K562 (cell line): ENCODE measurements at regions of chr10 and their contacts with region 1.

Region 1: DNA sequence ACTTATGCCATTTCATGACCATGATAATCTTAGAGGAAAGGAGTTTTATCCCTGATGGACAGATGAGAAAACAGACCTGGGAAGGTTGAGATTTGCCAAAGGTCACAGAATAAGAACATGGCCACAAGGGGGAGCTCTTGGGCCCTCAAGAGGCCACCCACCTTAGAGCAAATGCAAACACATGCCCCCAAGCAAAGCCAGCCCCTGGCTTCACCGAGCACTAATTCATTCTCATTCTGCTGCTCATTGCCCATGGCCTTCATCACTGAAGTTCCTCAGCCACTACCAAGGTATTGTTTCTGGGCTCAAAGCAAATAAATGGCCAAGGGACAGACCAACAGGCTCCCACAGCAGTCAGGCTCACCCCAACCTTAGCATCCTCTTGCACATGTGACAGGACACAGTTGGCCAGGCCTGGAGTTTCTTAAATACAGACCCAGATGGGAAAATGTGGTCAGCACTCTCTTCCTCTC is 44.2 kb downstream of the PDLIM1 start:
- DNase-seq: peak; percentile 59 to 81 (median 62)
- ATAC-seq: peak; percentile 86
- H3K4me3 ChIP-seq: no peak overlapping the region
- H3K27ac ChIP-seq: no peak overlapping the region
- H3K4me1 ChIP-seq: 0 out of 5 replicates have a peak, but pooled peaks cover 0 to 3% of the 10 kb centered on the region in 2 experiments
- H3K27me3 ChIP-seq: no peaks in the 10 kb centered on the region
- CTCF ChIP-seq: peak; percentile 61 to 77 (median 72)
- EP300 ChIP-seq: no peak
- POLR2A ChIP-seq: no peak
- RAD21 ChIP-seq: peak; percentile 73 to 84

Region 2: DNA sequence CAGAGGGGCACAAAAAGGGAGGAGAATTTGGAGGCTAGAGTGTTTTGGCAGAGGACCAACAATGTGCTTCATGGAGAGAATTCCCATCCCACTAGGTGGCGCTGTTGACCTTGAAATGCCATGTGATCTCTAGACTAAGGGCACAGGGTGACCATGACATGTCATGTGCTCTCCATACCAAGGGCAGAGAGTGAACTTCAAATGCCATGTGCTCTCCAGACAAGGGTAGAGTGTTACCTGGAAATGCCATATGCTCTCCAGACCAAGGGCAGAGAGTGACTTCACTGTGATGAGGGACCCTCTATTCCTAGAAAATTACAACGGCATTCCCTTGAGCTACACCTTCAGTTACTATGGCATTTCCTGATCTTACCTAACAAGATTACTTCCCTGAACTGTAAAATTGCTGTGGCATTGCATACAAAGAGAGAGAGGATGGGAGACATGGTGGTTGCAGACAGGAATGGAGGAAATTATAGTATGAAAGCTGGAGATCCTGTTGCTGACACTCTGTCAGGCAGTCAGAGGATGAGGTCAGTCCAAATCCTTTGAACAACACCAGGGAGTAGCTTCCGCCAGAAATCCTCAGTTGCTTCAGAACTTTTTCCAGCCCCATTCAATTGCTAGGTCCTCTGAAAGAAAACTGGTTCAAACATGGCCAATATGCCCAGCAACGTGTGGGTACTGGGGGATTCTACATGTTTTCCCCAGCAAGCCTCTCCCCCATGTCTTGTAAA is 113.4 kb before region 1 on chr10:
- CTCF ChIA-PET with region 1: interaction called, 9 read pairs
- POLR2A ChIA-PET with region 1: no interaction called
- in situ Hi-C with region 1: no loop called
- intact Hi-C with region 1: loop called (anchors 1 kb)
- DNase-seq: peak; percentile 57 to 86 (median 60)
- ATAC-seq: peak; percentile 93
- H3K4me3 ChIP-seq: no peak overlapping the region
- H3K27ac ChIP-seq: no peak overlapping the region
- H3K4me1 ChIP-seq: no peaks in the 10 kb centered on the region
- H3K27me3 ChIP-seq: no peaks in the 10 kb centered on the region
- CTCF ChIP-seq: peak; percentile 71 to 86 (median 76)
- EP300 ChIP-seq: no peak
- POLR2A ChIP-seq: no peak
- RAD21 ChIP-seq: peak; percentile 69 to 88

Region 3: GRCh38 chr10:95183271-95184230 is 63.1 kb before region 1 on chr10:
- CTCF ChIA-PET with region 1: interaction called, 8 read pairs
- POLR2A ChIA-PET with region 1: no interaction called
- in situ Hi-C with region 1: no loop called
- intact Hi-C with region 1: loop called (anchors 2 kb)
- DNase-seq: peak; percentile 85 to 91 (median 88)
- ATAC-seq: peak; percentile 100
- H3K4me3 ChIP-seq: peak overlapping the region; percentile 63
- H3K27ac ChIP-seq: peak overlapping the region; percentile 48; the same call in 1 of the 3 replicates
- H3K4me1 ChIP-seq: peaks cover 0 to 10% of the 10 kb centered on the region in 2 experiments; a peak in 2 of 5 replicates
- H3K27me3 ChIP-seq: no peaks in the 10 kb centered on the region; a peak in 2 of 5 replicates
- CTCF ChIP-seq: peak; percentile 77 to 98 (median 93)
- EP300 ChIP-seq: no peak
- POLR2A ChIP-seq: peak; percentile 70
- RAD21 ChIP-seq: peak; percentile 75

Region 4: DNA sequence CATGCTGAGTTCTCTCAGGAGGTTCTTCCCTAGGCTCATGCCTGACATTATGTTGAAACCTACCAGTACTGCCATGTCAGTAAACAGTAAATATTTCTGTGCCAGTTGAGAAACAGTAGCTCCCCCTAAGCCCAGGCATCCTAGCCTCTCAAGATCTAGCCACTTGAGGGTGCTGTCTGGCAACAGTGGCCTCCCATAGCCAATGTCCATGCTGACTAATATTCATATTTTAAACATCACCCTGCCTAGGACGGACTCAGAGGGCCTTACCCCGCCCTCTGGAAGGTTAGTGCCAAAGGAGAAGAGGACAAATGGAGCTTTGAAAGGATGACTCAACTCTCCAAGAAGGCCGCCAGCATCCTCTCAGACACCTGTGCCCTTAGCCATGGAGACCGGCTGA is 44.9 kb before region 1 on chr10:
- CTCF ChIA-PET with region 1: interaction called, 3 read pairs
- POLR2A ChIA-PET with region 1: no interaction called
- in situ Hi-C with region 1: no loop called
- intact Hi-C with region 1: loop called (anchors 5 kb)
- DNase-seq: peak in 1 of 4 experiments; percentile 14
- ATAC-seq: peak; percentile 63
- H3K4me3 ChIP-seq: no peak overlapping the region
- H3K27ac ChIP-seq: no peak overlapping the region
- H3K4me1 ChIP-seq: no peaks in the 10 kb centered on the region
- H3K27me3 ChIP-seq: no peaks in the 10 kb centered on the region; a peak in 2 of 5 replicates
- CTCF ChIP-seq: peak; percentile 30 to 49 (median 48); a peak in 4 of 6 replicates
- EP300 ChIP-seq: no peak
- POLR2A ChIP-seq: no peak
- RAD21 ChIP-seq: peak in 1 of 2 experiments; percentile 49; a peak in 2 of 4 replicates

Region 5: GRCh38 chr10:95289003-95289920 is 42.6 kb after region 1 on chr10:
- CTCF ChIA-PET with region 1: interaction called, 3 read pairs
- POLR2A ChIA-PET with region 1: no interaction called
- in situ Hi-C with region 1: no loop called
- intact Hi-C with region 1: loop called (anchors 5 kb)
- DNase-seq: peak; percentile 36 to 58 (median 43)
- ATAC-seq: peak; percentile 66
- H3K4me3 ChIP-seq: peak overlapping the region; percentile 88
- H3K27ac ChIP-seq: peak overlapping the region; percentile 87; the same call in 2 of the 3 replicates
- H3K4me1 ChIP-seq: peaks cover 24 to 30% of the 10 kb centered on the region in 2 experiments; a peak in 4 of 5 replicates
- H3K27me3 ChIP-seq: no peaks in the 10 kb centered on the region
- CTCF ChIP-seq: peak; percentile 28 to 50 (median 47); a peak in 5 of 6 replicates
- EP300 ChIP-seq: no peak
- POLR2A ChIP-seq: no peak
- RAD21 ChIP-seq: peak; percentile 11 to 41; a peak in 2 of 4 replicates

Region 6: DNA sequence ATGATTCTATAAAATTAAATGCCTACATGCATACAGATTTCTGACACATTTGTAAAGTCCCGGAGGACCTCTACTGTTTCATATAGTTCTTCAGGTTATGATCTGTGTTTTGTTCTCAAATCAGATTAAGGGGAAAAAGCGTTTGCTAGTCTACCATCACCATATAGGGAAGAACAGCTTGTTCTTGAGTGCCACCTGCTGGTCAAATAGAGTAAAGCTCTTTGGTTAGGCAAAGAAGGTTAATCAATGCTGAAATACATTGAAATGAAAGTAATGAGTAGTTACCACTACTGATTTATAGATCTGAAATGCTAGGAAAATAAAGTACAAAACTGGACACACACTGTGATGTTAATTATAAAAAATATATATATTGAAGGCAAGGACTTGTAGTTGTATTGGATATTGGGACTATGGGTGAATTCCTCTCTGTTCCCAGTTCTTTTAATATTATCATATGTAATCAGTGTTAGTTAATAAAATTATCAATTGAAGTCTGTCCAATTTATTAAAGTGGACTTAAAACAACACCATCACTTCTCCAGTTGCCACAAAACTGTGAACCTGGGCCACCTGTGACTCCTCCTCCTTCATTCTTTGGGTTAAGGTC is 116.8 kb after region 1 on chr10:
- CTCF ChIA-PET with region 1: interaction called, 56 read pairs
- POLR2A ChIA-PET with region 1: interaction called, 4 read pairs
- in situ Hi-C with region 1: loop called (anchors 5 kb)
- intact Hi-C with region 1: loop called (anchors 1 kb)
- DNase-seq: peak; percentile 58 to 74 (median 60)
- ATAC-seq: peak; percentile 79
- H3K4me3 ChIP-seq: no peak overlapping the region
- H3K27ac ChIP-seq: no peak overlapping the region
- H3K4me1 ChIP-seq: peaks cover 0 to 6% of the 10 kb centered on the region in 2 experiments; a peak in 3 of 5 replicates
- H3K27me3 ChIP-seq: no peaks in the 10 kb centered on the region
- CTCF ChIP-seq: peak; percentile 66 to 84 (median 72); a peak in 5 of 6 replicates
- EP300 ChIP-seq: no peak
- POLR2A ChIP-seq: no peak
- RAD21 ChIP-seq: peak; percentile 96 to 99

Region 7: GRCh38 chr10:95485445-95485844 is 238.8 kb after region 1 on chr10:
- CTCF ChIA-PET with region 1: no interaction called
- POLR2A ChIA-PET with region 1: no interaction called
- in situ Hi-C with region 1: no loop called
- intact Hi-C with region 1: no loop called
- DNase-seq: peak in 2 of 4 experiments; percentile 14 to 17
- ATAC-seq: no peak
- H3K4me3 ChIP-seq: no peak overlapping the region
- H3K27ac ChIP-seq: no peak overlapping the region
- H3K4me1 ChIP-seq: peaks cover 5 to 10% of the 10 kb centered on the region in 2 experiments; a peak in 2 of 5 replicates
- H3K27me3 ChIP-seq: no peaks in the 10 kb centered on the region
- CTCF ChIP-seq: no peak
- EP300 ChIP-seq: no peak
- POLR2A ChIP-seq: no peak
- RAD21 ChIP-seq: no peak

Region 8: DNA sequence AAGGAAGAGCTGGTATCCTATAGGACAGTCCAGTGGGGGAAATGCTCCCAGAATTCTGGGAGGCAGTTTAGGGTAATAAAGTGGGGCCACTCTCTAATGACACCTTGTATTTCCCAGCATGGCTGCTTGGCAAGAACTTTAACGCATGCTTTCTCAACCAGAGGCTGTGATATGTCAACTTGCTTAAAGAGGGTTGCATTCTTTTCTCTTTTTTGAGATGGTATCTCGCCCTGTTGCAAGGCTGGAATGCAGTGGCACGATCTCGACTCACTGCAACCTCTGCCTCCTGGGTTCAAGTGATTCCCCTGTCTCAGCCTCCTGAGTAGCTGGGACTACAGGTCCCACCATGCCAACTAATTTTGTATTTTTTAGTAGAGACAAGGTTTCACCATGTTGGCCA is 371.5 kb after region 1 on chr10:
- CTCF ChIA-PET with region 1: no interaction called
- POLR2A ChIA-PET with region 1: no interaction called
- in situ Hi-C with region 1: loop called (anchors 10 kb)
- intact Hi-C with region 1: no loop called
- DNase-seq: no peak
- ATAC-seq: no peak
- H3K4me3 ChIP-seq: no peak overlapping the region
- H3K27ac ChIP-seq: no peak overlapping the region
- H3K4me1 ChIP-seq: no peaks in the 10 kb centered on the region
- H3K27me3 ChIP-seq: no peaks in the 10 kb centered on the region
- CTCF ChIP-seq: no peak
- EP300 ChIP-seq: no peak
- POLR2A ChIP-seq: no peak
- RAD21 ChIP-seq: no peak